Right cardiac atrium (tissue), 5 donors: ENCODE measurements at regions of chr1 and their contacts with region 1.

Region 1: GRCh38 chr1:22625262-22625925 is 11.0 kb upstream of the C1QA start:
- DNase-seq: no peak
- ATAC-seq: no peak
- H3K4me3 ChIP-seq: no peak overlapping the region
- H3K27ac ChIP-seq: no peak overlapping the region
- H3K4me1 ChIP-seq: no peaks in the 10 kb centered on the region
- H3K27me3 ChIP-seq: no peaks in the 10 kb centered on the region

Region 2: GRCh38 chr1:22540337-22540736 is 85.1 kb before region 1 on chr1:
- intact Hi-C with region 1: loop called in 1 of 4 experiments (anchors 10 kb)
- DNase-seq: no peak
- ATAC-seq: no peak
- H3K4me3 ChIP-seq: no peak overlapping the region
- H3K27ac ChIP-seq: no peak overlapping the region
- H3K4me1 ChIP-seq: no peaks in the 10 kb centered on the region
- H3K27me3 ChIP-seq: no peaks in the 10 kb centered on the region